ENCODE measurements at regions of chr1 and their contacts with region 1.

Region 1: GRCh38 chr1:244874974-244875579 is 10.7 kb upstream of the HNRNPU start:
- DNase-seq: no peak
- ATAC-seq: no peak
- H3K4me3 ChIP-seq: no peak overlapping the region
- H3K27ac ChIP-seq: no peak overlapping the region
- H3K4me1 ChIP-seq: no peaks in the 10 kb centered on the region
- H3K27me3 ChIP-seq: no peaks in the 10 kb centered on the region
- CTCF ChIP-seq: no peak

Region 2: DNA sequence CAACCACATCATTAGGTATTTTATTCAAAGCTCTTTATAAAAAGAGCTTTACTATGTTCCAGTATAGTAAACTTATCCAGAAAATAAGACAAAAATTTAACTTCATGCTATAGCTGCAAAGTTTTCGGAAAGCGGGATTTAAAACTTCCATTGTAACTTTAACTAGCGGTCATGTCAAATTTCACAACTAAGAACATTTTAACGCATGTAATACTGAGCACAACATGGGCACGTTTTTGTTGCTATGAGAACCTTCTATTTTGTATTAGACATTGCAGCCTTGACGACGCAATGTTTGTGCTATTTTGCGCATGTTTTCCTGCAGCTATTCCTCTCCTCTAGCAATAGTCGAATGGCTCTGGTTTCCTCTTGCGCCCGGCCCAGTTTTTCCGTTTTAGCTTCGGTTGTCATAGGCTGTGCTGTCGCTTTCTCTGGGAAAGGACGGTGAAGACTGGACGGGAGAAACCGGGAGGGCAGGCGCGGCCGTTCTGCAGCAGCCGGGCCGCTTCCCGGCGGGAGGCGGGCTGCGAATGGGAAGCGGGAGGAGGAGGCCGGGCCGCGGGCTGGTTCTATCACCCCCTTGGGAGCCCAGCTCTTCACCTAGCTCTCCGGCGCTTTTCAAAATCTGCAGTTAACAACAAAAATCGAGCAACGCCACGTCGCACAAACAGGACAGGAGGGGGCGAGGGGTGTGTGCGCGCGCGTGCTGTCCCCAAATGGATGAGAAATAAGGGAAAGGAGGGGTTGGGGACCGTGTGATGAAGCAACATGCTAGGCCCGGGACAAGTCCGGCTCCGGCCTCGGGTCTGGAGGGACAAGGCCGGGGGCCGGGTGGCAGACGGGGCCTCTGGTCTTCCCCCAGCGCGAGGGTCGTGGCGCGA is 94.5 kb after region 1 on chr1:
- intact Hi-C with region 1: loop called in 1 of 3 experiments (anchors 10 kb)
- DNase-seq: peak; percentile 72 to 88 (median 80)
- ATAC-seq: peak; percentile 48 to 55 (median 51)
- H3K4me3 ChIP-seq: peak overlapping the region; percentile 54 to 68 (median 66)
- H3K27ac ChIP-seq: peak overlapping the region; percentile 99 to 100 (median 100)
- H3K4me1 ChIP-seq: peaks cover 10 to 22% (median 13%) of the 10 kb centered on the region in 3 donors
- H3K27me3 ChIP-seq: no peaks in the 10 kb centered on the region
- CTCF ChIP-seq: no peak

Region 3: DNA sequence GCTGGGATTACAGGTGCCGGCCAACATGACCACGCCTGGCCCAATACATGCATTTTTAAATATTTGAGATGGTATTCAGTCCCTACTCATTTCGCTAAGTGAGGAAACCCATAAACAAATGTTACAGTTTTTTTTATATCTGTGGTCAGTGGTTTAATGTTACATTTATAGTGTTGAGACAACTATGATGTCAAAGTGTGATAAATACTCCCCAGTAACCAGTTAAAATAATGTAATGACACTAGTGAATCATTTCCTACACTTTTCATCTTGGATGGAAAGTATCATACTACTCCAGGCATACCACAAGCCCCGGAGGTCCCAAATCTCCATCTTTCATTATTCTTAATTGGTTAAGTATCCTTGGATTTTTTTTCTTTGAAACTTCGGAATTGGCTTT is 192.2 kb after region 1 on chr1:
- intact Hi-C with region 1: no loop called
- DNase-seq: no peak
- ATAC-seq: no peak
- H3K4me3 ChIP-seq: no peak overlapping the region
- H3K27ac ChIP-seq: no peak overlapping the region
- H3K4me1 ChIP-seq: no peaks in the 10 kb centered on the region
- H3K27me3 ChIP-seq: no peaks in the 10 kb centered on the region
- CTCF ChIP-seq: no peak

Measured in pancreas (tissue), 10 donors.